ENCODE measurements at regions of chr22 and their contacts with region 1.

Region 1: DNA sequence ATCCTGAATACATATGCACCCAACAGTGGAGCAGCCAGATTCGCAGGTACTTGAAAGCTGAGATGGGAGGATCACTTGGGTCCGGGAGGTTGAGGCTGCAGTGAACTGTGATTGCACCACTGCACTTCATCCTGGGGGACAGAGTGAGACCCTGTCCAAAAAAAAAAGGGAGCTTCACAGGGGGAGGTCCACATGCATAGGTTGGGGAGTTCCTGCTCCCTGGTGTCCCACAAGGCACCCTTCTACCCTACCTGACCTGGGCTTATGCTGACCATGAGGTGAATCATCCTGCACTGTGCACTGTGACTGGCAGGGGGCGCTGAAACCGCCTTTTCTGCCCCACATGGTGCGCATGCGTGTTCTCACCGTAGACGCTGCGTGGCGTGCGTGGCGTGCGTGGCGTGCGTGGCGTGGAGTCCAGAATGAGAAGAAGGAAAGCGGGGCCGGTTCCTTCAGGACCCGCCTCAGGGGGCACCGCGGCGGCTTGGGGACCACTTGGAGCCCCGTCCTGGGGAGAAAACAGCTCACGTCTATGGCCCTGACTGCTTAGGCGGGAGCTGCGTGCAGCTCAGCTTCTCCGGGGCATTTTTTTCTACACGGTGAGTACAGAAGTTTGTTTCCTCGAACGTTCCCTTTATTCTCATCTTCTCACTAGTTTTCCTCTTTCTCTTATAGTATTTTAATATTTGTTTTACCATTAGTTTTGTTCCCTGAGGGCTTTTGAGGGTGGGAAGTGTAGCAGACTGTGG is 116.6 kb upstream of the GRK3 start:
- DNase-seq: peak; percentile 94
- H3K4me3 Mint-ChIP-seq: peak overlapping the region; percentile 79
- H3K27ac Mint-ChIP-seq: peak overlapping the region; percentile 89
- H3K4me1 Mint-ChIP-seq: peaks cover 41% of the 10 kb centered on the region
- H3K27me3 Mint-ChIP-seq: no peaks in the 10 kb centered on the region

Region 2: GRCh38 chr22:25362215-25362882 is 85.5 kb before region 1 on chr22:
- CTCF ChIA-PET with region 1: interaction called, 3 read pairs
- POLR2A ChIA-PET with region 1: no interaction called
- intact Hi-C with region 1: loop called (anchors 5 kb)
- DNase-seq: peak; percentile 78
- H3K4me3 Mint-ChIP-seq: no peak overlapping the region
- H3K27ac Mint-ChIP-seq: no peak overlapping the region
- H3K4me1 Mint-ChIP-seq: no peaks in the 10 kb centered on the region
- H3K27me3 Mint-ChIP-seq: no peaks in the 10 kb centered on the region

Region 3: GRCh38 chr22:25465949-25466348 is 18.1 kb after region 1 on chr22:
- CTCF ChIA-PET with region 1: interaction called, 10 read pairs
- POLR2A ChIA-PET with region 1: no interaction called
- intact Hi-C with region 1: no loop called
- DNase-seq: no peak
- H3K4me3 Mint-ChIP-seq: no peak overlapping the region
- H3K27ac Mint-ChIP-seq: no peak overlapping the region
- H3K4me1 Mint-ChIP-seq: no peaks in the 10 kb centered on the region
- H3K27me3 Mint-ChIP-seq: no peaks in the 10 kb centered on the region

Region 4: DNA sequence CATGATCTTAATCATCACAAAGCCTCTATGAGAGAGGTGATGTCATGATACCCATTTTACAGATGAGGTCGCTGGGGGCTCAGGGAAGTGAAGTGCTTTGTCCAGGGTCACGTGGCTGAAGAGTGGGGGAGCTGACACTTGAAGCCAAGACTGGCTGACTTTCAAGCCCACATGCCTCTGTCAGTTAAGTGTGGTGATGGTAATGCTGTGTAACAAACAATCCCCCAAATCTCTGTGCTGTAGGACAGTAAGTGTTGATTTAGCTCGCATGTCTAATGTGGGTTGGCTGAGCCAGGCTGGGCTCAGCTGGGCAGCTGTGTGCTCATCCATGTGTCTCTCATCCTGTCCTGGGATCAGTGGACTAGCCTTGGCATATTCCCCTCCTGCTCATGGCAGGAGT is 29.5 kb after region 1 on chr22:
- CTCF ChIA-PET with region 1: no interaction called
- POLR2A ChIA-PET with region 1: no interaction called
- intact Hi-C with region 1: no loop called
- DNase-seq: no peak
- H3K4me3 Mint-ChIP-seq: no peak overlapping the region
- H3K27ac Mint-ChIP-seq: no peak overlapping the region
- H3K4me1 Mint-ChIP-seq: peaks cover 4% of the 10 kb centered on the region
- H3K27me3 Mint-ChIP-seq: no peaks in the 10 kb centered on the region

Region 5: DNA sequence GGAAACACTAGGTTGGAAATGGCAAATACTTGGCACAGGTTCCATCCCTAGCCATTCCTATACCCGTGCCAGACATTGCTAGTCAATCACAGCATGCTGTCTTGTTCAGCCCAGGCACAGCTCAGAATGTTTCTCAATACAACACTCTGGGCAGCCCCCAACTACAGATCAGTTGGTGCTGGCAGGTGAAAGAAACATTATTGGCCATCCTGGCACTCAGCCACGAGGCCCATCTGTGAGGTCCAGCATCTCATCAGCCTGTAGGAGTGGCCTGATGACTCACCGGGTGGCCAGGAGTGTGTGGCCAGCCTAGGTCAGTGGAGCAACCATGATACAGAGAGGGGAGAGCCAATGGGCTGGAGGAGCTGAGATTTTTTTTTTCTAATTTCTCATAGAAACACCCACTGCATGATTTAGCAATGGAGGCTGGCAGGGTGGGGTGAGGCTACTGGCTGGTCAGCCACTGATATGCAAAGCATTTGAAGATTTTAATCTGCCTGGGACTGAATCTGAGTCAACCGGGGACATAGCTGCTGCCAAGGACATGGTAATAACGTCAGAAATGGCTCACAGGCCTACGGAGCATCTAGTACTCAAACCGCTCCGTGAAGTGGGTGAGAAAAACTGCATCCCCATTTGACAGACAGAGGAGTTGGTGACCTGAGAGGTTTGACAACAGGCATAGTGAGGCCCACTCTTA is 299.5 kb after region 1 on chr22:
- CTCF ChIA-PET with region 1: no interaction called
- POLR2A ChIA-PET with region 1: interaction called, 3 read pairs
- intact Hi-C with region 1: loop called (anchors 5 kb)
- DNase-seq: no peak
- H3K4me3 Mint-ChIP-seq: no peak overlapping the region
- H3K27ac Mint-ChIP-seq: no peak overlapping the region
- H3K4me1 Mint-ChIP-seq: peaks cover 50% of the 10 kb centered on the region
- H3K27me3 Mint-ChIP-seq: peaks cover 17% of the 10 kb centered on the region

Region 6: GRCh38 chr22:25777870-25778269 is 330.0 kb after region 1 on chr22:
- CTCF ChIA-PET with region 1: interaction called, 13 read pairs
- POLR2A ChIA-PET with region 1: no interaction called
- intact Hi-C with region 1: loop called (anchors 5 kb)
- DNase-seq: peak; percentile 16
- H3K4me3 Mint-ChIP-seq: no peak overlapping the region
- H3K27ac Mint-ChIP-seq: no peak overlapping the region
- H3K4me1 Mint-ChIP-seq: peaks cover 3% of the 10 kb centered on the region
- H3K27me3 Mint-ChIP-seq: peaks cover 3% of the 10 kb centered on the region

Region 7: GRCh38 chr22:26025626-26026025 is 577.8 kb after region 1 on chr22:
- CTCF ChIA-PET with region 1: no interaction called
- POLR2A ChIA-PET with region 1: no interaction called
- intact Hi-C with region 1: no loop called
- DNase-seq: no peak
- H3K4me3 Mint-ChIP-seq: no peak overlapping the region
- H3K27ac Mint-ChIP-seq: no peak overlapping the region
- H3K4me1 Mint-ChIP-seq: no peaks in the 10 kb centered on the region
- H3K27me3 Mint-ChIP-seq: no peaks in the 10 kb centered on the region